ENCODE measurements at regions of chr14 and their contacts with region 1.

Region 1: GRCh38 chr14:49633640-49634546 is 1.2 kb downstream of the DNAAF2 start:
- DNase-seq: peak; percentile 93
- H3K4me3 ChIP-seq: peak overlapping the region; percentile 82
- H3K27ac ChIP-seq: peak overlapping the region; percentile 95
- H3K4me1 ChIP-seq: peaks cover 81% of the 10 kb centered on the region
- H3K27me3 ChIP-seq: no peaks in the 10 kb centered on the region
- CTCF ChIP-seq: peak; percentile 86

Region 2: GRCh38 chr14:49767562-49768300 is 133.8 kb after region 1 on chr14 and contains the start of gene KLHDC2:
- intact Hi-C with region 1: loop called (anchors 10 kb)
- DNase-seq: peak; percentile 92
- H3K4me3 ChIP-seq: peak within 1 kb of the TSS; percentile 99
- H3K27ac ChIP-seq: peak within 1 kb of the TSS; percentile 100
- H3K4me1 ChIP-seq: peaks cover 47% of the 10 kb centered on the region
- H3K27me3 ChIP-seq: no peaks in the 10 kb centered on the region
- CTCF ChIP-seq: peak; percentile 53
- total RNA-seq, gene KLHDC2: 85.3 TPM

Region 3: GRCh38 chr14:49783394-49784010 is 149.6 kb after region 1 on chr14:
- intact Hi-C with region 1: no loop called
- DNase-seq: no peak
- H3K4me3 ChIP-seq: no peak overlapping the region
- H3K27ac ChIP-seq: no peak overlapping the region
- H3K4me1 ChIP-seq: no peaks in the 10 kb centered on the region
- H3K27me3 ChIP-seq: no peaks in the 10 kb centered on the region
- CTCF ChIP-seq: no peak

Region 4: GRCh38 chr14:49796025-49796424 is 162.1 kb after region 1 on chr14:
- intact Hi-C with region 1: no loop called
- DNase-seq: no peak
- H3K4me3 ChIP-seq: no peak overlapping the region
- H3K27ac ChIP-seq: no peak overlapping the region
- H3K4me1 ChIP-seq: peaks cover 11% of the 10 kb centered on the region
- H3K27me3 ChIP-seq: no peaks in the 10 kb centered on the region
- CTCF ChIP-seq: no peak

Measured in left ventricle myocardium inferior (tissue), 1 donor.